Lower leg skin (tissue), 4 donors: ENCODE measurements at regions of chr1 and their contacts with region 1.

Region 1: DNA sequence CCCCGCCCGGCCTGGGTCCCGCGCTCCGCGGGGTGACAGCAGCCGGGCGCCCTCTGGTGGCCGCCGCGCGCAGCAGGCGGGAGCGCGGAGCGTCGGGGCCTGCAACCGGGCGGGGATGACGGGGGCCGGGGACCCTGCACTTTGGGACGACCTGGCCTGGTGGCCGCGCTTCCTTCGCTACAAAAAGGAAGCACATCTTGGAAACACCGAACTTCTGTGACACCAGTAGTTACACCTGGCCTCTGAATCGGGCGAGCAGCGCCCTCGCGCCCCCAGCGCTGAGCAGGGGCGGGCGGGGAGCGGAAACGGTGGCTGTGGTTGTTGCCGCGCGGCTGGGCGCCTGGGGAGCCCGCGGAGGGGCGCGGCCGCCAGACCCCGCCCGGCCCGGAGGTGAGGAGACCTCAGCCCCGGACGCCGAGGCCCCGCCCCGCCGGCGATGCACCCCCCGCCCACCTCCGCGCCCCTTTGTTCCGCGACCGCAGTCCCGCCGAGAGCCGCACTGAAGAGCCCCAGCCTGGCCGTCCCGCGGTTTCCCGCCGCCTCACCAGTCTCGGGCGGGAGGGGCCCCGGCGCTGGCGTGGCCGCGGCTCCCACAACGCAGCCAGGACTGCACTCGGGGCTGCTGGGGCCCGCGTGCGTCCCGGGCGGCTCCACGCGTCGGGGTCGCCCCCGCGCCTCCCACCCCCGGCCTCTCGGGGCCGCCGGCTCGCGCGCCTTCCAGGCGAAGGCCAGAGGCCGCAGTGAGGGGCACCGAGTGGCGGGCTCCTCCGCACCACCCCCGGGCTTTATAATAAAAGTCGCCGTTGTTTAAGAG is 59.3 kb downstream of the H3-3A start:
- DNase-seq: peak in 1 of 2 donors; percentile 91
- H3K4me3 ChIP-seq: peak overlapping the region; percentile 45
- CTCF ChIP-seq: no peak
- POLR2A ChIP-seq: no peak

Region 2: GRCh38 chr1:226064816-226065248 is 57.0 kb before region 1 on chr1:
- intact Hi-C with region 1: loop called (anchors 1 kb)
- DNase-seq: peak in 1 of 2 donors; percentile 61
- H3K4me3 ChIP-seq: no peak overlapping the region
- CTCF ChIP-seq: no peak
- POLR2A ChIP-seq: no peak

Region 3: DNA sequence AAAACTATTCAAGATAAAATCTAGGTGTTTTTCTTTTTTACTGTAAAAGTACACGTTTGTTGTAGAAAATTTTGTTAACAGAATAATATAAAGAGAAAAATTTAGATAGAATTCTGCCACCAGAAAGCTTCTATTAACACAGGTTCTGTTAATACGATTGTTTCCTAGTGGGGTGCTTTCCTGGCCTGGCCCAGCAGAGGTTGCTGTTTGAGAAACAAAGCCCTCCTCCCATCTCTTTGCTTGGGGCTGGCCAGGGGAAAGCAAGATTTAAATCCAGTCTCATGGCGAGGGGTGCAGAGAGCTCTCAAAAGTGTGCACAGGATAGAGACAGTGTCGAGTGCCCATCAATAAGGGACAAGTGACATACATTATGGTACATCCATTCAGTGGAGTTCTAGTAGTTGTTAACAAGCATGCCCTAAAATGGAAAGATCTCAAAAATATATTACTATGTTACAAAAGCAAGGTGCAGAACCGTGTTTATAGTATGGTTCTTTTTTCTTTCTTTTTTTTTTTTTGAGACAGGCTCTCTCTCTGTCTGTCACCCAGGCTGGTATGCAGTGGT is 79.3 kb after region 1 on chr1:
- intact Hi-C with region 1: loop called (anchors 5 kb)
- DNase-seq: no peak
- H3K4me3 ChIP-seq: no peak overlapping the region
- CTCF ChIP-seq: no peak
- POLR2A ChIP-seq: no peak